ENCODE measurements at regions of chr3 and their contacts with region 1.

Region 1: GRCh38 chr3:44913868-44914468 is 39.6 kb downstream of the TGM4 start:
- DNase-seq: peak; percentile 30 to 86 (median 70)

Region 2: GRCh38 chr3:44529927-44530326 is 384.0 kb before region 1 on chr3:
- intact Hi-C with region 1: loop called (anchors 10 kb)
- DNase-seq: peak in 5 of 42 donors; percentile 1 to 46 (median 17)

Measured in head of caudate nucleus (tissue), 42 donors.